ENCODE measurements at regions of chr1 and their contacts with region 1.

Region 1: DNA sequence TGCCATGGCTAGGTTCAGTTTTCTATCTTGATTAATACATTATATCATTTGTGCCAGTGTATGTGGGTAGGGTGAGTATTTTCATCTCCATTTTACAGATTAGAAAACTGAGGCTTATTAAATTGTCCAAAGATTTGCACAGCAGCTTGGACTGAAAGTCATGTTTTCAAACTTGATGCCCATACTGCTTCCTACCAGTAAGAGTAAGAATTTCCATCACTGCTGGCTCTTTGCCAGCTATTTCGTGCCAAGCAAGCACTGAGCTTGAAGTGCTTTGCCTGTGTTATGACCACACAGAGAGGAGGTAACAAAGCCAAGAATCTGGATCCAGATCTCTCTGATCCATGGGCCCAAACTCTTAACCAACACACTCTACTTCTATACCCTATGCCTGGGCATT is 295.0 kb downstream of the VAV3 start:
- DNase-seq: no peak
- ATAC-seq: no peak
- H3K4me3 ChIP-seq: no peak overlapping the region
- H3K27ac ChIP-seq: no peak overlapping the region
- H3K4me1 ChIP-seq: peaks cover 12% of the 10 kb centered on the region
- H3K27me3 ChIP-seq: no peaks in the 10 kb centered on the region
- CTCF ChIP-seq: no peak
- EP300 ChIP-seq: no peak
- POLR2A ChIP-seq: no peak
- RAD21 ChIP-seq: no peak

Region 2: DNA sequence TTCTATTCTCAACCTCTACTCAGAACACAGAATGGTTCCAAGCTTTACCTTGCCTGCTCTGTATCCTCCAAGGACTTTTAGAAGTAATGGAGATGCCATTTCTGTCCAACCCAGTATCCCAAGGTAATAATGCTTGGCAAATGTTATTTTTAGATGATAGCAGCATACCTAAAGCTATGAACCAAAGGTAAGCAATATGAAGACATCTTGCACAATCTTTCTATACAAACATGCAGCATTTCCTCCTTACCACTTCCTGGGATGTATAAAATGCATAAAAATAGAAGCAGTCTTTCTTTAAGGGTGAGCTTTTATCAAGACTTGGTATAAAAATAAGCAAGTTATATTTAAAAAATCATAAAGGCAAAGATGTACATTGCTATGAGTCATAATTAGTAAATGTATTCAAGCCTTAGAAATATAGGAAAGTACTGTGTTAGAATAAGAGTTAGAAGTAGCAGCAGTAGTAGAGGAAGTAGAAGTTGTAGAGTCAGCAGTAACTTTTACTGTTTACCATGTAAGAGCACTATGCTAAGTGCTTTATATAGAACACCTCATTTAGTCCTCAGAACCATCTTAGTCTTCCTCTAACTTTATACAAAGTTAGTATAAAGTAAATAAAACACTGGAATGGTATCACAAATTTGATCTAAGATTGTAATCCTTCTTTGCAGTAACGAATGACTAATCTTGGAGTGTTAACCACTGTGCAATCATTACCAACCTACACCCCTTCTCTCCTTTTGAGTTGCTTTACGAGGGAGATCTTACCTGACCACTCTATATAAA is 76.4 kb before region 1 on chr1:
- CTCF ChIA-PET with region 1: no interaction called
- POLR2A ChIA-PET with region 1: no interaction called
- in situ Hi-C with region 1: no loop called
- intact Hi-C with region 1: loop called (anchors 2 kb)
- DNase-seq: no peak
- ATAC-seq: no peak
- H3K4me3 ChIP-seq: no peak overlapping the region
- H3K27ac ChIP-seq: no peak overlapping the region
- H3K4me1 ChIP-seq: peaks cover 52% of the 10 kb centered on the region
- H3K27me3 ChIP-seq: no peaks in the 10 kb centered on the region
- CTCF ChIP-seq: no peak
- EP300 ChIP-seq: no peak
- POLR2A ChIP-seq: no peak
- RAD21 ChIP-seq: no peak

Region 3: GRCh38 chr1:107829061-107830040 is 159.4 kb after region 1 on chr1:
- CTCF ChIA-PET with region 1: no interaction called
- POLR2A ChIA-PET with region 1: no interaction called
- in situ Hi-C with region 1: no loop called
- intact Hi-C with region 1: no loop called
- DNase-seq: no peak
- ATAC-seq: no peak
- H3K4me3 ChIP-seq: no peak overlapping the region
- H3K27ac ChIP-seq: no peak overlapping the region
- H3K4me1 ChIP-seq: no peaks in the 10 kb centered on the region
- H3K27me3 ChIP-seq: no peaks in the 10 kb centered on the region
- CTCF ChIP-seq: no peak
- EP300 ChIP-seq: no peak
- POLR2A ChIP-seq: no peak
- RAD21 ChIP-seq: no peak